Natural killer cell (primary cell): ENCODE measurements at regions of chrX and their contacts with region 1.

Region 1: DNA sequence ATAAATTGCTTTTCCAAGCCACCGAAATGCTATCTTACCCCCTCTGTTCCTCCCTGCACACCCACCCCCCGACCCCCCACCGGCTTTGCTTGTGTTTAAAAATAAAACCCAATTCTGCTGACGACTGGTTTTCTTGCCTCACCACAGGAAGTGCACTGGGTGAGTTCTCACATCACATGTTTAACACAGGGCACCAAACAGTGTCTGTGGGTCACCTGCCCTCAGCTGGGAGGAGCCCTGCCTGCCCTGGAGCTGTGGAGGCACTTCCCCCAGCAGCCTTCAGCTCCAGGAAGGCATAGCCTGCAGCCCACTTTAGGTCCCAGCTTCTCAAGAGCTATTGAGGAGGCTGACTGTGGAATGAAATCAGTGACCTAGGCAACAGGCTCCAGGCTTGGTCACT is 8.8 kb downstream of the TMEM255A start:
- DNase-seq: peak; percentile 51 to 75
- ATAC-seq: peak; percentile 97 to 99 (median 99)
- H3K4me3 ChIP-seq: no peak overlapping the region
- H3K4me3 Mint-ChIP-seq: peak overlapping the region; percentile 81
- H3K27ac ChIP-seq: peak overlapping the region; percentile 46
- H3K27ac Mint-ChIP-seq: peak overlapping the region; percentile 82 to 93
- H3K4me1 ChIP-seq: peaks cover 41% of the 10 kb centered on the region
- H3K4me1 Mint-ChIP-seq: peaks cover 39 to 52% of the 10 kb centered on the region in 2 donors
- H3K27me3 ChIP-seq: no peaks in the 10 kb centered on the region
- H3K27me3 Mint-ChIP-seq: peaks cover 0 to under 1% of the 10 kb centered on the region in 2 donors
- CTCF ChIP-seq: no peak

Region 2: DNA sequence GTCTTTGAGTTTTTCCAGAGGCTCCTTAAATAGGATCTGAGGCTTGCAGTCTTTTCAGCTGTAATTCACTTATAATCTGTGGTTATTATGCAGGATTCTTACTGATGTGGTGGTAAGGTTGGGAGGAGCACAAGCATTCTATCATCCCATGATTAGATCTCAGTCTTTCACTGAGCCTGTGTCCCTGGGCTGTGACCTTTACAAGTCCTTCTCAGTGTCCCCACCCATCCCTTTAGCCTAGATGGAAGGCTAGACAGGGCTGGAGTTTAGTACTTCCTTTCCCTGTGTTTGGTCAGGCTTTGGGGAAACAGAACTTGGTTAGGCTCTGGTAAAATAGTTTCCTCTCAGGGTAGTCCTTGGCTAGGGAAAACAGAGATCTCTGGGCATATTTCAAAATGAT is 341.8 kb before region 1 on chrX:
- intact Hi-C with region 1: no loop called
- DNase-seq: no peak
- ATAC-seq: no peak
- H3K4me3 ChIP-seq: no peak overlapping the region
- H3K4me3 Mint-ChIP-seq: no peak overlapping the region
- H3K27ac ChIP-seq: no peak overlapping the region
- H3K27ac Mint-ChIP-seq: no peak overlapping the region
- H3K4me1 ChIP-seq: peaks cover 16% of the 10 kb centered on the region
- H3K4me1 Mint-ChIP-seq: peaks cover 7 to 10% of the 10 kb centered on the region in 2 donors
- H3K27me3 ChIP-seq: peaks cover 2% of the 10 kb centered on the region
- H3K27me3 Mint-ChIP-seq: peaks cover 8 to 33% of the 10 kb centered on the region in 2 donors
- CTCF ChIP-seq: no peak

Region 3: GRCh38 chrX:120468825-120469525 is 166.5 kb after region 1 on chrX and contains the start of gene LAMP2:
- intact Hi-C with region 1: loop called (anchors 5 kb)
- DNase-seq: peak; percentile 74 to 88
- ATAC-seq: peak; percentile 96 to 97 (median 96)
- H3K4me3 ChIP-seq: peak within 1 kb of the TSS; percentile 96
- H3K4me3 Mint-ChIP-seq: peak within 1 kb of the TSS; percentile 91
- H3K27ac ChIP-seq: peak within 1 kb of the TSS; percentile 78
- H3K27ac Mint-ChIP-seq: peak within 1 kb of the TSS; percentile 83 to 88
- H3K4me1 ChIP-seq: peaks cover 11% of the 10 kb centered on the region
- H3K4me1 Mint-ChIP-seq: peaks cover 21 to 29% of the 10 kb centered on the region in 2 donors
- H3K27me3 ChIP-seq: no peaks in the 10 kb centered on the region
- H3K27me3 Mint-ChIP-seq: no peaks in the 10 kb centered on the region
- CTCF ChIP-seq: no peak
- total RNA-seq, gene LAMP2: 33.8 to 45.8 (median 39.1) TPM